Colonic mucosa (tissue), 4 donors: ENCODE measurements at regions of chr15 and their contacts with region 1.

Region 1: DNA sequence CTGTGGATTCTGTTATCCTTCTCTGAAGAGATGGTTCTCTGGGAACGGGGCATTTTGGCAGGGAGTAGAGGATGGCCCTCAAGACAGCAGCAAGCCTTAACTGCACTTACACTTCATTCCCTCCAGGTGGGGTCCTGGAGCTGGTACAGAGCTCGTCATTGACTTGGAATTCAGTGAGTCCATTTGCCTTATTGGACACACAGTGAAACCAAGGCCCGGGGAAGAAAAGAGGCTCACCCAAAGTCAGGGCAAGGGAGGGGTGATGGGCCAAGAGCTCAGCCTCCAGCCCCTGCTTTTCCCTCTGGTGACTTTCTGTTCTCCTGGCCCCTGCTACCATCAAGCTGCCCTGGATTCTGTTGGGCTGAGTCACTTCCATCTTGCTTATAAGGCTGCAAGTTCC is 125.6 kb downstream of the ETFA start:
- DNase-seq: peak; percentile 42
- H3K4me3 ChIP-seq: no peak overlapping the region
- H3K27ac ChIP-seq: no peak overlapping the region
- H3K4me1 ChIP-seq: no peaks in the 10 kb centered on the region
- H3K27me3 ChIP-seq: no peaks in the 10 kb centered on the region
- CTCF ChIP-seq: peak; percentile 49

Region 2: GRCh38 chr15:76866716-76867321 is 681.1 kb after region 1 on chr15:
- intact Hi-C with region 1: loop called (anchors 5 kb)
- DNase-seq: no peak
- H3K4me3 ChIP-seq: no peak overlapping the region
- H3K27ac ChIP-seq: no peak overlapping the region
- H3K4me1 ChIP-seq: no peaks in the 10 kb centered on the region
- H3K27me3 ChIP-seq: no peaks in the 10 kb centered on the region
- CTCF ChIP-seq: peak; percentile 37